ENCODE measurements at regions of chr3 and their contacts with region 1.

Region 1: DNA sequence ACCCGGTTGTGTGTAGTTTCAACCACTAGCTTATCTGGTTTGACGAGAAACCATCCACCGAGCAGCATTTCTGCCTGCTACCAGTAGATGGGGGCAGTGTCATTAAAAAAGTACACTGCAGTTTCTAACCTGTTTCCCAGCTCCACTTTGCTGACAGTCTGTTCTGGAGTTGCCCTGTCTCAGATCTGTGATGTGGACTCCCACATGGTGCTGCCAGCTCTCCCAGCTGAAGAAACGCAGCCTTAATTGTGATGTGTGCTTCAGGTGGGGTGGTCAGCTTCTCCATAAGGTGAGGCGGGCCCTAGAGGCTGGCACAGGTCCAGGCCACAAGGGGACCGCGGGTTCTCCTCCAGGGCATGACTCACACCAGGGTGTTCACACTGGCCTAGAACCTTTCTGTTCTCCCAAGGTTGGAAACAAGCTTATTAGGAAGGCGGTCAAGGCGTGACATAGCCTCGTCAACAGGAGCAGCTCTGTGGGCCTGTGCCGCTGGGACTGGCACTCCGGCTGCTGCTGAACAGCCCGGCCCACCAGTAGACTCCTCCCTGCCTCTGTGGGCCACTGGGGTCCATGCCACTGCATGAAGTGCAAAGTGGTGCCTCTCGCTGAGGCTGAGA is 2.9 kb upstream of the FAM43A start:
- DNase-seq: peak; percentile 81
- CTCF ChIP-seq: peak; percentile 91

Region 2: DNA sequence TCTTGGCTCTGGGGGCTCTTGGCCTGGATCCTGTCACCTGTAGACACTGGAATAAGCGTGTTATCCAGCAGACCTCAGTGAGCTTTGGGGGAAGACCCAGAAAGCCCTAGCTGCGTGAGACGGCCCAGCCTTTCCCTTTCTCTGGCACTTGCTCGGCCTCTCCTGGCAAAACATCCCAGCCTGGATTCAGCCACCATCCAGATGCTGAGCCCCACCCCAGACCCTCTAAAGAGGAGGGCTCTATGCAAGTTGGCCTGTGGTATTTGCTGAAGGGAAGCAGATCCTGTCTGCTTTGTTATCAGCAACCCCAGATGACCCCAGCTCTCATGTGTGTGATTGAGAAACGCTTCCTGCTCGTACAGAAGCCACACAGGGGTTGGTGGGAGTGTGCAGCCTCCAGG is 270.0 kb after region 1 on chr3:
- in situ Hi-C with region 1: no loop called
- DNase-seq: no peak
- CTCF ChIP-seq: no peak

Region 3: GRCh38 chr3:195040773-195041520 is 358.1 kb after region 1 on chr3:
- in situ Hi-C with region 1: no loop called
- DNase-seq: no peak
- CTCF ChIP-seq: no peak

Region 4: DNA sequence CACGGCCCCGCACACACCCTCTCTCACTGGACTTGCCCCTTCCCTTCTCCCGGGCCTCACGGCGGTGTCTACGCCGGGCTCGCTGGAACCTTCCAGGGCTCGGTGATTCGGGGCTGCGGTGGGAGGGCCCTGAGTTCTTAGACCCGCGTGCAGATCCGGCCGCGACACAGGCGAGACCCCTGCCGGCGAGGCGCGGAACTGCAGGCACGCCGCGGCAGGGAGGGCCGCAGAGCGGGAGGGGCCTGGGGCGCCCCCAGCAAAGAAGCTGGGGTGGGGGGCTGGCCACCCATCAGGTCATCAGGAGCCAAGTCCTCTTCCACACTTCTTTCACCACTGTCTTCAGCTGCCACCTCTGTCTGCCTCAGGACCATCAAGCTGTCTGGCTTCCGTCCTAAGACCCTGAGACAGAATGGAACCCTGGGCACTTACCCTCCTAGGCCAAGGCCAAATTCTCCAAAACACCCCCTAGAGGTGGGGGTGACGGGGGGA is 423.7 kb after region 1 on chr3:
- in situ Hi-C with region 1: loop called (anchors 10 kb)
- DNase-seq: peak; percentile 88
- CTCF ChIP-seq: peak; percentile 99

Region 5: DNA sequence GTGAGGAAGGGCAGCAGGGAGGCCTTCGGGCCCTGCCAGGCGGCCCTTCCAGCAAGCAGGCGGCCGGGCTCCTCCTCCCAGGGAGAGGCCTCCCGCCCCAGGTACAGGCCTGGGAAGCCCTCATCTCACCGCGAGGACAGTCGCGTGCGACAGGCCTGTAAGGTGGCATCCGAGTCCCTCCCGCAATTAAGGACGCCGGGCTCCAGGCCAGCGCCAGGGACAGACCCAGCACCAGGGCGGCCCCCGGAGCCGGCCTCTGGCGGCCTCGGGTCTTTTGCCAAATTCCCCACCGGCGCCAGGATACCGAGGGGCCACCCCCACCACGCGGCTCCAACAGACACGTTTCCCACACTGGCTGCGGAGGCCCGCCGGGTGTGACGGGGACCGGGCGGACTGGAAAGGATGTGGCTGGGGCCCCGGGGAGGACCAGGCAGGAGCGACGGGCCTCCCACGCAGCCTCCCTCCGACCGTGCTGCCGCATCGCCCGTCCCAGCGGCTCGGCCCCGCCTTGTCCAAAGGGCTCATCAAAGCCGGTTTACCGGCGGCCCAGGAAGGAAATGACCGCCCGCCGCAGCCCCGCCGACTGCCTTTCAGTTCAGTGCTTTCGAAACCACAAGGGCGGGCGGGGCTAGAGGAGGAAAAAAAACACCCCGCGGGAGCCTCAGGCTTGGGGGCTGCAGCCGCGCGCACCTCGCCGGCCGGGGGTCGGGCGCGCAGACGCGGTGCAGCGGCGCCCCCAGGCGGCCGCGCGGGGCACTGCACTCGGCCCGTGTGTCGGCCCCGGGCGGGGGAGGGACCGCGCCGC is 576.9 kb after region 1 on chr3:
- in situ Hi-C with region 1: loop called (anchors 10 kb)
- DNase-seq: peak; percentile 96
- CTCF ChIP-seq: peak; percentile 96

Region 6: GRCh38 chr3:195542698-195543499 is 860.1 kb after region 1 on chr3 and contains the start of gene PPP1R2:
- in situ Hi-C with region 1: loop called (anchors 25 kb)
- DNase-seq: peak; percentile 97
- CTCF ChIP-seq: no peak